Activated CD4-positive, alpha-beta memory T cell treated with anti-CD3 and anti-CD28 coated beads for 36 hours (primary cell): ENCODE measurements at regions of chr11 and their contacts with region 1.

Region 1: DNA sequence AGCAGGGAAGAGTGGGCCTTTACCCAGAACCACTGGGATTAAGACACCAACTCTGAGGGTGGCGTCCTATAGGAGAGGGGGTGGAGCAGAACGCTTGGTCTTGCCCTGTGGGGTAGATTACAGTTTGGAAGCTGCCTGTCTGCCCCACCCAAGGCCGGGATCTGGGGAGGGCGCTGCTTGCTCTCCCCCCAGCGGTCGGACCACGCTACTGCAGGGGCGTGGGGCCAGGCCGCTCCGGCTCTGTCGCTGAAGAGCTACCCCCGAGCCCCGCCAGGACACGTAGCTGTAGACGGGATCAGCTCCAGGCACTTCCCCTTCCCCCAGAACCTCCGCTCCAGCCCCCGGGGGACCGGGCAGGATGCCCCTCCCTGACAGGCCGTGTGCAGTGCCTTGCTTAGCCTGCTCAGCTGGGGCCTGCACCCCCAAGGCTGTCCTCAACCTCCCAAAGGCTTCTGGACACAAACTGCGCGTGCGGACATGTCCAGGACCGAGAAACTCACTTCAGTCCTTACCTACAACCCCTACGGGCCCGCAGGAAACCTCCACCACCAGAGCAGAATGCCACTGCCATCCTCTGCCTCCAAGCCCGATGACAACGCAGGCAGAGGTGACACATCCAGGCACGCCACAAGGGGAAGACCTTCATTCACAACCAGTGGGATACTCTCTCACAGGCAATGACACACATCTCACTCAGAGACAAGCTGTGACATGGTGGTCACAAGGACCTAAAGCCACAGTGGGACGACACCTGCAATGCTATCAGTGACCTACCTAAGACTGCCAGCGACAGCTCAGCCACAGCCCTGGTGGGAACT is 3.6 kb downstream of the AHNAK start:
- DNase-seq: peak; percentile 88
- H3K4me3 Mint-ChIP-seq: peak overlapping the region; percentile 93
- H3K27ac Mint-ChIP-seq: peak overlapping the region; percentile 83
- H3K4me1 Mint-ChIP-seq: peaks cover 75% of the 10 kb centered on the region
- H3K27me3 Mint-ChIP-seq: no peaks in the 10 kb centered on the region

Region 2: GRCh38 chr11:62315431-62315830 is 227.5 kb before region 1 on chr11:
- CTCF ChIA-PET with region 1: no interaction called
- POLR2A ChIA-PET with region 1: no interaction called
- intact Hi-C with region 1: no loop called
- DNase-seq: no peak
- H3K4me3 Mint-ChIP-seq: no peak overlapping the region
- H3K27ac Mint-ChIP-seq: no peak overlapping the region
- H3K4me1 Mint-ChIP-seq: peaks cover 13% of the 10 kb centered on the region
- H3K27me3 Mint-ChIP-seq: peaks cover 12% of the 10 kb centered on the region

Region 3: DNA sequence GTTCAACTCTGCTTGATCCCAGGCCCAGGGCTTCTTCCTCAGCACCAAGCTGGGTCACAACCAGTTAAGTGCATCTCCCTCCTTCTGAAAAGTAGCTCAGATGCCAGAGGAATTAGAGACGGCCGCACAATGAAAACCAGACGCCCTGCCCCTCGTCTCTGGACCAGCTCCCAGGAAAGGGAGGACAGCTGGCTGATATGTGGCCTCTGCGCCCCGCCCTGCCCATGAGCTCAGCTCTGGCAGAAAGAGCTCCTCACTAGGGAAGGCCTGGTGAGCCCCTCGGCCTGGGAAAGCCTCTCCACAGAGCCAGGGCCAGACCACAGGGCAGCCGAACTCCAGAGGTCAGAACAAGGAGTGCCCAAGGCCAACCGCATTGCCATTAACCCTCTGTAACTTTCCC is 142.2 kb before region 1 on chr11:
- CTCF ChIA-PET with region 1: interaction called, 48 read pairs
- POLR2A ChIA-PET with region 1: no interaction called
- intact Hi-C with region 1: no loop called
- DNase-seq: no peak
- H3K4me3 Mint-ChIP-seq: no peak overlapping the region
- H3K27ac Mint-ChIP-seq: no peak overlapping the region
- H3K4me1 Mint-ChIP-seq: peaks cover 25% of the 10 kb centered on the region
- H3K27me3 Mint-ChIP-seq: no peaks in the 10 kb centered on the region

Region 4: GRCh38 chr11:62497132-62497915 is 45.6 kb before region 1 on chr11:
- CTCF ChIA-PET with region 1: interaction called, 16 read pairs
- POLR2A ChIA-PET with region 1: no interaction called
- intact Hi-C with region 1: loop called (anchors 5 kb)
- DNase-seq: peak; percentile 39
- H3K4me3 Mint-ChIP-seq: no peak overlapping the region
- H3K27ac Mint-ChIP-seq: no peak overlapping the region
- H3K4me1 Mint-ChIP-seq: peaks cover 2% of the 10 kb centered on the region
- H3K27me3 Mint-ChIP-seq: no peaks in the 10 kb centered on the region

Region 5: DNA sequence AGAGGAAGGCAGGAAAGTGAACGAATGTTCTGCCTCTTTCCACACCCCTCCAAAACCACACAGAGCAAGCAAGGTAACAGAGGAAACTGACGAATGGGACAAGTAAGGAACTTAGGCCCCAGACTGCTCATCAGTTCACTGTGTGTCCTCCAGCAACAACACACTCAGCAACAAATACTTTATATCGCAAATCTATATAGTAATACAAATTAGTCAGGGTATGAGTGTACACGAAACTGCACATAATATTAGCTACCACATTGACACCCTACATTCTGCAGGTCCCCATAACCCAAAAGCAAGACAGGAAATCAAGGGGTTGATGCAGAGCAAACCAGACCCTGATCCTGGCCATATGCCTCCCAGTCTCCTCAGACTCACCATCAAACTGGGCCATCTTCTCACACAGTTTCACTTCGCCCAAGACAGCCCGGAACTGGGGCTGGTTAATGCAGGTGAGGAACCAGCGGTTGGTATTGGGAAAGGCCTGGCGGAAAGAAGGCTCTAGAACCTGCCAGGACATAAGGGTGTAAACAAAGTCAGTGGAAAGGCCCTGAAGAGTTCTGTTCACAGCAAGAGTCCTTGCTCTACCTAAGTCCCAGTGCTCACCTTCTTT is 24.2 kb after region 1 on chr11:
- CTCF ChIA-PET with region 1: interaction called, 19 read pairs
- POLR2A ChIA-PET with region 1: interaction called, 7 read pairs
- intact Hi-C with region 1: no loop called
- DNase-seq: no peak
- H3K4me3 Mint-ChIP-seq: no peak overlapping the region
- H3K27ac Mint-ChIP-seq: peak overlapping the region; percentile 85
- H3K4me1 Mint-ChIP-seq: peaks cover 62% of the 10 kb centered on the region
- H3K27me3 Mint-ChIP-seq: no peaks in the 10 kb centered on the region

Region 6: GRCh38 chr11:62573592-62574362 is 30.8 kb after region 1 on chr11 and contains the start of gene EEF1G:
- CTCF ChIA-PET with region 1: interaction called, 15 read pairs
- POLR2A ChIA-PET with region 1: interaction called, 8 read pairs
- intact Hi-C with region 1: no loop called
- DNase-seq: peak; percentile 99
- H3K4me3 Mint-ChIP-seq: peak within 1 kb of the TSS; percentile 93
- H3K27ac Mint-ChIP-seq: peak within 1 kb of the TSS; percentile 96
- H3K4me1 Mint-ChIP-seq: peaks cover 50% of the 10 kb centered on the region
- H3K27me3 Mint-ChIP-seq: no peaks in the 10 kb centered on the region
- total RNA-seq, gene EEF1G: 1,956 to 1,989 TPM